ENCODE measurements at regions of chr16 and their contacts with region 1.

Region 1: DNA sequence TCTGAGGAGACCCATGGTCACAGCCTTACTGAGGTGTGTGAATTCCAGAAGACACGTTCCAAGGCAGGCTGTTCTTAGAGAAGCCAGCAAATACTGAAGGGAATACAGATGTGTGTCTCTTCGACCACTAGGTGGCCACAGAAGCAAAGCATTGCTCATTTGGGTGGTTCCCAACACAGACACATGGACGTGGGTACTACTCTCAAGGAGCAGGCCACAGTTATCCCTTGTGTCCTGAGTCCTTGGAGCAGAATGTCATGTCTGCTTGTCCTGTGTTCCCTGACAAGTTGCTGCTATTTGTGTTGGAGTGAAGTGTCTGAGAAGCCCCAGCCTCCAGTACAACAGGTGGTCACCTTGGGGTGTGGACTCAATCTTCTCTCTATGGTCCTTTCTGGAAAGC is 30.3 kb downstream of the HMOX2 start:
- DNase-seq: peak; percentile 74
- ATAC-seq: peak; percentile 75
- H3K4me3 Mint-ChIP-seq: no peak overlapping the region
- H3K27ac Mint-ChIP-seq: peak overlapping the region; percentile 88
- H3K4me1 Mint-ChIP-seq: peaks cover 48% of the 10 kb centered on the region
- H3K27me3 Mint-ChIP-seq: no peaks in the 10 kb centered on the region
- CTCF ChIP-seq: peak; percentile 97

Region 2: GRCh38 chr16:4475880-4476788 is 30.3 kb before region 1 on chr16 and contains the start of gene HMOX2:
- CTCF ChIA-PET with region 1: interaction called, 28 read pairs
- POLR2A ChIA-PET with region 1: interaction called, 20 read pairs
- intact Hi-C with region 1: no loop called
- DNase-seq: peak; percentile 95
- ATAC-seq: peak; percentile 82
- H3K4me3 Mint-ChIP-seq: peak within 1 kb of the TSS; percentile 92
- H3K27ac Mint-ChIP-seq: peak within 1 kb of the TSS; percentile 83
- H3K4me1 Mint-ChIP-seq: peaks cover 33% of the 10 kb centered on the region
- H3K27me3 Mint-ChIP-seq: no peaks in the 10 kb centered on the region
- CTCF ChIP-seq: peak; percentile 35
- total RNA-seq, gene HMOX2: 64.7 to 65.4 TPM

Region 3: GRCh38 chr16:4517812-4518680 is 11.6 kb after region 1 on chr16:
- CTCF ChIA-PET with region 1: interaction called, 24 read pairs
- POLR2A ChIA-PET with region 1: interaction called, 5 read pairs
- intact Hi-C with region 1: no loop called
- DNase-seq: peak; percentile 27
- ATAC-seq: no peak
- H3K4me3 Mint-ChIP-seq: no peak overlapping the region
- H3K27ac Mint-ChIP-seq: no peak overlapping the region
- H3K4me1 Mint-ChIP-seq: peaks cover 35% of the 10 kb centered on the region
- H3K27me3 Mint-ChIP-seq: no peaks in the 10 kb centered on the region
- CTCF ChIP-seq: peak; percentile 49

Region 4: GRCh38 chr16:4538350-4539235 is 32.1 kb after region 1 on chr16 and contains the start of gene CDIP1:
- CTCF ChIA-PET with region 1: interaction called, 174 read pairs
- POLR2A ChIA-PET with region 1: interaction called, 6 read pairs
- intact Hi-C with region 1: no loop called
- DNase-seq: peak; percentile 99
- ATAC-seq: peak; percentile 83
- H3K4me3 Mint-ChIP-seq: peak within 1 kb of the TSS; percentile 62
- H3K27ac Mint-ChIP-seq: peak within 1 kb of the TSS; percentile 82
- H3K4me1 Mint-ChIP-seq: peaks cover 37% of the 10 kb centered on the region
- H3K27me3 Mint-ChIP-seq: no peaks in the 10 kb centered on the region
- CTCF ChIP-seq: no peak
- total RNA-seq, gene CDIP1: 31.9 to 32.2 TPM

Region 5: DNA sequence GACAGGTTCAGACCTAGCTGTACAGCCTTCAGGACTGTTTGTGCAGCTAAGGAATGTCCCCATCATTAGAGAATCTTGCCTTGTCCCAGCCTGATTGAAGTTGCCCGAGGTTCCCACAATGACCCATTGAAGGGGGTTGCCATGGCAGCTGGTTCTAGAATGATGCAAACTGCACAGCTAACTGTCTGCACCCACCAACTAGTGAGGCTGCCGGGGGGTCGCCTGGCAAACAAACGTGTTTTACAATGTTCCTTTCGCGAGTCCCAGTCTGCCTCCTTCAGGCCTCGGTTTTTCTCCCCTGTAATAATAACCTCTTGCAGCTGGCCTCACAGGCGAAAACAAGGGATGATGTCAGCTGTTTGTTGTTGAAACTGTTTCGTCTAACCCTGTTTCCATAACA is 55.1 kb after region 1 on chr16:
- CTCF ChIA-PET with region 1: interaction called, 12 read pairs
- POLR2A ChIA-PET with region 1: no interaction called
- intact Hi-C with region 1: no loop called
- DNase-seq: no peak
- ATAC-seq: no peak
- H3K4me3 Mint-ChIP-seq: no peak overlapping the region
- H3K27ac Mint-ChIP-seq: no peak overlapping the region
- H3K4me1 Mint-ChIP-seq: peaks cover 3% of the 10 kb centered on the region
- H3K27me3 Mint-ChIP-seq: no peaks in the 10 kb centered on the region
- CTCF ChIP-seq: no peak

Region 6: GRCh38 chr16:4616047-4616811 is 109.8 kb after region 1 on chr16:
- CTCF ChIA-PET with region 1: interaction called, 13 read pairs
- POLR2A ChIA-PET with region 1: interaction called, 4 read pairs
- intact Hi-C with region 1: no loop called
- DNase-seq: peak; percentile 100
- ATAC-seq: peak; percentile 88
- H3K4me3 Mint-ChIP-seq: peak overlapping the region; percentile 96
- H3K27ac Mint-ChIP-seq: peak overlapping the region; percentile 99
- H3K4me1 Mint-ChIP-seq: peaks cover 34% of the 10 kb centered on the region
- H3K27me3 Mint-ChIP-seq: no peaks in the 10 kb centered on the region
- CTCF ChIP-seq: peak; percentile 40

Region 7: GRCh38 chr16:4935251-4935855 is 428.9 kb after region 1 on chr16:
- CTCF ChIA-PET with region 1: no interaction called
- POLR2A ChIA-PET with region 1: no interaction called
- intact Hi-C with region 1: no loop called
- DNase-seq: no peak
- ATAC-seq: no peak
- H3K4me3 Mint-ChIP-seq: no peak overlapping the region
- H3K27ac Mint-ChIP-seq: no peak overlapping the region
- H3K4me1 Mint-ChIP-seq: peaks cover 4% of the 10 kb centered on the region
- H3K27me3 Mint-ChIP-seq: peaks cover 29% of the 10 kb centered on the region
- CTCF ChIP-seq: no peak

Measured in activated CD8-positive, alpha-beta T cell treated with anti-CD3 and anti-CD28 coated beads for 36 hours (primary cell).